ENCODE measurements at regions of chr2 and their contacts with region 1.

Region 1: DNA sequence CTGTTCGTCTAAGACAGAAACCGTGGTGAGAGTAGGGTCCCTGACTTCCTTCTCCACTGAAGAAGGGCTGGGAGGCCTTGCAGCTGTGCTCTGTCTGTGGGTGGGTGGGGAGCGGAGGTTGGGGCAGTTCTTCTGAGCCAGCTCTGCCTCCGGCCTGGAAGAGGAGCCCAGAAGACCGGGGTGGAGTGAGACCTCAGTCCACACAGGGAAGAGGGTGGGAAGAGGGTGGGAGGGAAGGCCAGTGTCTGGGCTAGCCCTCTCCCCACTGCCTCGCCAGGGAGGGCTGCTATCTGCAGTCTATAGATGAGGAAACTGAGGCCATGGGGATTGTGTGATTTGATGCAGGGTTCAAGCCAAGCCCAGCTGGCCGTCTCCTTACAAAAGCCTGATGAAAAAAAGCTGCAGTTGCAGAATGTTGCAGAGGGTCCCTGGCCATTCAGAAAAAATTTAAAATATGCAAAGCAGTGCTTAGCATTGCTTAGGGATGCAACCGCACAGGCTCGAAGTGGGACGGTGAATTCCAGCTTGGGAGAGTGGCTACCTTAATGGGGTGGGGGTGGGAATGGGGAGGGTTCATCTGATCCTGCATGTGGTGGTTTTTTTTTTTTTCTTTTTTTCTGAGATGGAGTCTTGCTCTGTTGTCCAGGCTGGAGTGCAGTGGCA is 181.6 kb upstream of the HS6ST1 start:
- DNase-seq: no peak
- H3K4me3 Mint-ChIP-seq: no peak overlapping the region
- H3K27ac Mint-ChIP-seq: no peak overlapping the region
- H3K4me1 Mint-ChIP-seq: no peaks in the 10 kb centered on the region
- H3K27me3 Mint-ChIP-seq: no peaks in the 10 kb centered on the region
- CTCF ChIP-seq: no peak

Region 2: DNA sequence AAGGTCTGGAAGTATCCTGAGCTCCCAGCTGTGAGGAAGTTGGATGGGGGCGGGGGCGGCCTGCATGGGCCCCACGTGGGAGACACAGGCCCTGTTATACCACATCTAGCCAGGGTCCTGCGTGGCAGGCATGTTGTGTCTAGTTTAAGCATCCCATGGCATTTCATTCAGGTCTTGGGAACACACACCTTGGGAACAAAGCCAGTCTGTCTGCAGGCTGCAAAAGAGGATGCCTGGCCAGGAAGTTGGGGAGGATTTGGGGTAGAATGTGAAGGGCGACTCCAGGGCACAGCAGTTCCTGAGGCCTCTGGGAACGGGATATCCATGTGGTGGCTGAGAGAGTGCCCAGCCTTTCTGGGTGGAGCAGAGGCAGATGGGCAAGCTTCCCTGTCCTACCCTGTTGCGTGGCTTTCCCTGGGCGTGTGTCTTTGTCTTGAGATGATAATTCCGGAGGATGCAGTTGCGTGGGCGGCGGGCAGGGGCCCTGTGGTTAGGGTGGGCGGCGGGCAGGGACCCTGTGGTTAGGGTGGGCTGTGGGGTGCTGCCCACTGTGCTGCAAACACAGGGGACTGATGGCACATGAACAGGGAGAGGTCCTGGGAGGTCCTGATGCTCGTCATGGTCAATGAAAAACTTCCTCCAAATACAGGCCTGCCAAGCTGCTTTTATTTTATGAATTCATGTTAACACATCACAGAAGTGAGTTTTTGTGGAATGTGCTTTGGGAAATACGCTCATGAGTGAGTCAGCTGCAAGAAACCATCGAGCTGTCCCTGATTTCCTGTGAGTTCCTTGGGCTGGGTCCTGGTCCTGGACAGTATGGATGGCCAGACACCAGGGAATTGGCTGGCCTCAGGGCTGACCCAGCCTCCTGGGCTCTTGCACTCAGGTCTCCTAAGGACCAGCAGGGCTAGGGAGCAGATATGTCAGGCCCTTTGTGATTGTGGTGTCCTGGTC is 91.6 kb before region 1 on chr2:
- CTCF ChIA-PET with region 1: no interaction called
- intact Hi-C with region 1: no loop called
- DNase-seq: no peak
- H3K4me3 Mint-ChIP-seq: no peak overlapping the region
- H3K27ac Mint-ChIP-seq: no peak overlapping the region
- H3K4me1 Mint-ChIP-seq: no peaks in the 10 kb centered on the region
- H3K27me3 Mint-ChIP-seq: no peaks in the 10 kb centered on the region
- CTCF ChIP-seq: no peak

Region 3: GRCh38 chr2:128585706-128586105 is 85.4 kb after region 1 on chr2:
- CTCF ChIA-PET with region 1: no interaction called
- intact Hi-C with region 1: no loop called
- DNase-seq: no peak
- H3K4me3 Mint-ChIP-seq: no peak overlapping the region
- H3K27ac Mint-ChIP-seq: no peak overlapping the region
- H3K4me1 Mint-ChIP-seq: no peaks in the 10 kb centered on the region
- H3K27me3 Mint-ChIP-seq: peaks cover 19% of the 10 kb centered on the region
- CTCF ChIP-seq: no peak

Region 4: GRCh38 chr2:128950758-128951157 is 450.5 kb after region 1 on chr2:
- CTCF ChIA-PET with region 1: interaction called, 13 read pairs
- intact Hi-C with region 1: no loop called
- DNase-seq: no peak
- H3K4me3 Mint-ChIP-seq: no peak overlapping the region
- H3K27ac Mint-ChIP-seq: no peak overlapping the region
- H3K4me1 Mint-ChIP-seq: no peaks in the 10 kb centered on the region
- H3K27me3 Mint-ChIP-seq: no peaks in the 10 kb centered on the region
- CTCF ChIP-seq: no peak